Activated T-helper 2 cell treated with anti-CD3 and anti-CD28 coated beads, Interferon-gamma antibody, Interleukin-2, Interleukin-4, amounts not matched to agents 10 μg/mL and 5 μg/mL and 100 μg/mL, durations not matched to agents 14 hours and 24 hours and 36 hours (primary cell): ENCODE measurements at regions of chr2 and their contacts with region 1.

Region 1: GRCh38 chr2:64523666-64524603 is at the start of gene AFTPH:
- DNase-seq: peak; percentile 99
- H3K4me3 Mint-ChIP-seq: peak within 1 kb of the TSS; percentile 100
- H3K27ac Mint-ChIP-seq: peak within 1 kb of the TSS; percentile 100
- H3K4me1 Mint-ChIP-seq: peaks cover 36% of the 10 kb centered on the region
- H3K27me3 Mint-ChIP-seq: peaks cover 5% of the 10 kb centered on the region
- total RNA-seq, gene AFTPH: 34.6 and 36.6 TPM in 2 replicates

Region 2: DNA sequence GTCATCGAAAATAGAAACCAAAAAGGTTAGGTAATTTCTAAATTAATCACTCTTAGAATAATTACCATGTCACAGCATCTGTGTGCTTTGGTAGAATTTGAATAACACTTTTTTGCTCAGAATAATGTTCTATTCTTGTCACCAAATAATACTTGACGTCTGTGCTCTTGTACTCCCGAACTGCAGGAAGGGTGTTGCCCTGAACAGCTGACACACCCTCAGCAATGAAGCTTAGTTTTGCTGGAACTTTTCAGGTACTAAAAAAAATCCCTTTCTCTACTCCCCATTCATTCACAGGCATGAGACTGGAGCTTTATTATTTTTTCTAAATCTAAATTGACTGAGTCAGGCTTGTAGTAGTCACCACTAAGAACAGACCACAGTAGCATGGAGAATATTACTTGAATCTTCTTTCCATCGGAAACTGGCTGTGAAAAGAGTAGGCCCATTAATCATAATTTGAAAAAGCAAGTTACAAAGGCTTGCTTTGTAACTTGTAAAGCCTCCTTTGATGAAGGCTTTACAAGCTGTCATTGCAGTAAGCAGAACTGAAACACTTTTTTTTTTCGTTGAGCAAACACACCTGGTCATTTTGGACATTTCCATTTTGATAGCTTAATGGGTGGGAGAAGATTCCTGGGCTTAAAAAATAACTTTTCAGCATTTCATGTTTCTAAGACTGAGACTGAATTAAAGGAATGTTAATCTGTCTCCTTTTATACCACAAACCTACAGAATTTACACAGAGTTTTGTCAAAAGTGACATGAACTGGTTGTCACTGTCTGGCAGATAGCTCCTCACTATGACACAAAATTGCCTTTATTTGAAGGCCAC is 309.4 kb before region 1 on chr2:
- intact Hi-C with region 1: loop called (anchors 2 kb)
- DNase-seq: no peak
- H3K4me3 Mint-ChIP-seq: peak overlapping the region; percentile 50
- H3K27ac Mint-ChIP-seq: peak overlapping the region; percentile 95
- H3K4me1 Mint-ChIP-seq: peaks cover 44% of the 10 kb centered on the region
- H3K27me3 Mint-ChIP-seq: no peaks in the 10 kb centered on the region

Region 3: GRCh38 chr2:64562148-64562784 is 38.3 kb after region 1 on chr2:
- intact Hi-C with region 1: loop called (anchors 1 kb)
- DNase-seq: no peak
- H3K4me3 Mint-ChIP-seq: no peak overlapping the region
- H3K27ac Mint-ChIP-seq: peak overlapping the region; percentile 28
- H3K4me1 Mint-ChIP-seq: peaks cover 38% of the 10 kb centered on the region
- H3K27me3 Mint-ChIP-seq: no peaks in the 10 kb centered on the region

Region 4: DNA sequence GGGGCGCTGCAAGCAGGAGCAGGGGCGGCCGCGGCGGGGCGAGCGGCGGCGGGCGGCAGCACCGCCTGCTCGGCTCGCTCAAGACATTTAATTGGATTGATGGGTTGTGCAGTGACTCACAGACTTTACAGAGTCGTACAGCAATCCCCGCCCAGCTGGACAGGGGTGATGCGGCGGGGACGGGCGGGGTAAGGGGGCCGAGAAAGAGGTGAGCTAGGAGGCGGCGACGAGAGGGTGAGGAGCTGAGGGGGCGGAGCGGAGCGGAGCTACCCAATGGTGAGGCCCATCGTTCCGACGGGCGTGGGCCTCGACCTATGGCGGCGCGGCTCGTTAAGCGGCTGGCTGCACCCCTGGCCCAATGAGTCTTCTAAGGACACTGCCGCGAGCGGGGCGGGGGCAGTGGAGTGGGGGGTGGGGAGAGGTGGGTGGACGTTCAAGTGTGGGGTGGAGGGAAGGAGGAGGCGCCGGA is 226.9 kb after region 1 on chr2:
- intact Hi-C with region 1: loop called (anchors 1 kb)
- DNase-seq: peak; percentile 98
- H3K4me3 Mint-ChIP-seq: peak overlapping the region; percentile 87
- H3K27ac Mint-ChIP-seq: peak overlapping the region; percentile 96
- H3K4me1 Mint-ChIP-seq: peaks cover 29% of the 10 kb centered on the region
- H3K27me3 Mint-ChIP-seq: no peaks in the 10 kb centered on the region

Region 5: GRCh38 chr2:64819361-64819760 is 295.4 kb after region 1 on chr2:
- intact Hi-C with region 1: no loop called
- DNase-seq: no peak
- H3K4me3 Mint-ChIP-seq: no peak overlapping the region
- H3K27ac Mint-ChIP-seq: peak overlapping the region; percentile 91
- H3K4me1 Mint-ChIP-seq: peaks cover 31% of the 10 kb centered on the region
- H3K27me3 Mint-ChIP-seq: no peaks in the 10 kb centered on the region

Region 6: GRCh38 chr2:64914735-64915509 is 391.0 kb after region 1 on chr2:
- intact Hi-C with region 1: loop called (anchors 5 kb)
- DNase-seq: no peak
- H3K4me3 Mint-ChIP-seq: no peak overlapping the region
- H3K27ac Mint-ChIP-seq: no peak overlapping the region
- H3K4me1 Mint-ChIP-seq: peaks cover 42% of the 10 kb centered on the region
- H3K27me3 Mint-ChIP-seq: no peaks in the 10 kb centered on the region

Region 7: GRCh38 chr2:65227425-65228262 is 703.7 kb after region 1 on chr2 and contains the start of gene ACTR2:
- intact Hi-C with region 1: loop called (anchors 2 kb)
- DNase-seq: peak; percentile 95
- H3K4me3 Mint-ChIP-seq: peak within 1 kb of the TSS; percentile 98
- H3K27ac Mint-ChIP-seq: peak within 1 kb of the TSS; percentile 96
- H3K4me1 Mint-ChIP-seq: peaks cover 27% of the 10 kb centered on the region
- H3K27me3 Mint-ChIP-seq: no peaks in the 10 kb centered on the region
- total RNA-seq, gene ACTR2: 339 and 350 TPM in 2 replicates